Astrocyte of the cerebellum (primary cell): ENCODE measurements at regions of chr7 and their contacts with region 1.

Region 1: GRCh38 chr7:123689250-123689649 is 33.6 kb downstream of the LMOD2 start:
- DNase-seq: no peak
- H3K4me3 ChIP-seq: no peak overlapping the region
- CTCF ChIP-seq: no peak

Region 2: DNA sequence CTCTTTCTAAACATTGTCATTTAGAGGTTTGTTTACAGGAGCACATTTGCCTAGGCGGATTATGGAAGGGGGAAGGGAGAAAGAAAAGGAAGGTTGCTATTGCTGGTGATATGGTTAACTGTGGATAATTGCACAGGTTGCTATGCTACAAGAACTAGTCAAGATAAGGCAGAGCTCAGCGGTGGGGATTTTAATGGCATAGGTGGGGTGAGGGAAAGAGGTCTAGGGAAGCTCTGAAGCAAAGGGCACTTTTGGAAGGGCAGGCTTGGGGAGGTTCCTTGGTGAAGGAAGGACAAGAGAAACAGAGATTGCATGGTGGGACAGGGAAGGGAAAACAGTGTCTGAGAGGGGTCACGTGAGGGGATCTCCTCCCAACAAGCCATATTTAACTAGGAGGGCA is 175.2 kb after region 1 on chr7:
- in situ Hi-C with region 1: loop called (anchors 5 kb)
- DNase-seq: no peak
- H3K4me3 ChIP-seq: no peak overlapping the region
- CTCF ChIP-seq: no peak

Region 3: GRCh38 chr7:123904151-123904550 is 214.9 kb after region 1 on chr7:
- in situ Hi-C with region 1: no loop called
- DNase-seq: no peak
- H3K4me3 ChIP-seq: no peak overlapping the region
- CTCF ChIP-seq: no peak

Region 4: GRCh38 chr7:124152859-124153692 is 463.8 kb after region 1 on chr7:
- in situ Hi-C with region 1: no loop called
- DNase-seq: no peak
- H3K4me3 ChIP-seq: no peak overlapping the region
- CTCF ChIP-seq: peak; percentile 52